Sigmoid colon (tissue), 7 donors: ENCODE measurements at regions of chr2 and their contacts with region 1.

Region 1: GRCh38 chr2:85390941-85391669 is 19.1 kb downstream of the CAPG start:
- DNase-seq: peak; percentile 83
- H3K4me3 ChIP-seq: no peak overlapping the region
- H3K27ac ChIP-seq: no peak overlapping the region
- H3K4me1 ChIP-seq: peaks cover 0 to 2% (median 2%) of the 10 kb centered on the region in 4 donors
- H3K27me3 ChIP-seq: no peaks in the 10 kb centered on the region
- CTCF ChIP-seq: peak; percentile 45 to 62 (median 58)
- EP300 ChIP-seq: no peak
- POLR2A ChIP-seq: no peak

Region 2: DNA sequence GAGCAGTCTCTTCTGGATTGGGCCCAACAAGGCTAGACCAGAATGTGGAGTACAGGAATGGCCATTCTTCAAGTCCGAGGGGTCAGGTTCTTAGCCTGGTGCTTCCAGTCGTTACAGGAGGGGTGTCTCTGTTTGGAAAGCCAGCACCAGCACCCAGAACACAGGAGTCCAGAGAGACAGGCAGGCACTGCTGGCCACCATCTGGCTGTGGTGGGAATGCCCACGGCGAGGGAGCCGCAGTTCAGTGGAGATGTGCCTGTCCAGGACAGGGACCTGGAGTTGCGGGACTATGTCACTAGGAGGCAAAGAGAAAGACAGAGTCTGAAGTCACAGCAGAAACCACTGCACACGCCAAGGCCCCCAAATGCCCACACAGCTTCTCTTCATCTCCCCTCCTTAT is 569.3 kb before region 1 on chr2:
- intact Hi-C with region 1: no loop called
- DNase-seq: no peak
- H3K4me3 ChIP-seq: no peak overlapping the region
- H3K27ac ChIP-seq: no peak overlapping the region
- H3K4me1 ChIP-seq: no peaks in the 10 kb centered on the region
- H3K27me3 ChIP-seq: no peaks in the 10 kb centered on the region
- CTCF ChIP-seq: no peak
- EP300 ChIP-seq: no peak
- POLR2A ChIP-seq: no peak

Region 3: DNA sequence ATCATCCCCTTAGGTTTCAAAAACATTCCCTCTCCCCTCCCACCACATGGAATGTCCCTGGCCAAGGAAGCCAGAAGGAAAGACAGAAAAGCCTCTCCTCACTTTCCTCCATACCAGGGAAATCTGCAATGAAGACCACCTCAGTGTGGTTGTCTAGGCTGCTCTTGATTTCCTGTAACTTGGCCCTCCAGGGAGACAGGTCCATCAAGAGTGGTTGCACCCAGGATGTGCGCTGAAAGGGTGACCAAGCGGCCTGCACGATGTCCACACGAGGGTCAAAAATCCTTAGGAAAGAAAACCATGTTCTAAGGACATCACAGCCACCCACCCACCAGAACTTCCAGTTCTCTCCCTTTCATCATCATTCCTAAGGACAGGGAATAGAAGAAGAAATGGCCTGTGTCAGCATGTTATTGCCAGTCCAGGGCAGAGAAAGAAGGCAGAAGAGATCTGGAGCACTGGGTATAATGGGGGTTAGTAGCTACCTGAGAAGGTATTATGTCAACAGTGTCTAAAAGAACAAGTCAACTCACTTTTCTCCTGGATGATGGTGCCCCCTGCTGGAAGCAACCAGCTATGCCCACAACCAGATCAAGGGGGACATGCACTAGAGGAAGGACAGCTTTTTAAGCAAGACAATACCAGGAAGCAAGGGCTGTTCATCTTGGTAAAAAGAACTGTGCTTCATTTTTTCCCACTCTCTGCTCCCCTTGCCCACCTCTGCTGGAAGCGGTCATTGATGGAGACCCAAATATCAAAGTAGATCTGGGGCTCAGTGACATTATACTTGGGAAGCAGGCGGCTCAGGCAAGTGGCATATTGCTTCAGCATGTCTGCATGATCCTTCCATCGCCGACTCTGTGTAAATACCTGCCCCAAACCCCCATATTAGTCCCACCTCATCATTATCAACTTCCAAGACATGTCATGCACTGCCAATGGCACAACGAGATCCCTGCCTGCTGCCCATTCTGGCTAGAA is 160.9 kb after region 1 on chr2:
- intact Hi-C with region 1: loop called (anchors 1 kb)
- DNase-seq: peak; percentile 90
- H3K4me3 ChIP-seq: no peak overlapping the region
- H3K27ac ChIP-seq: peak overlapping the region in 1 of 4 donors; percentile 25
- H3K4me1 ChIP-seq: no peaks in the 10 kb centered on the region
- H3K27me3 ChIP-seq: no peaks in the 10 kb centered on the region
- CTCF ChIP-seq: peak; percentile 85 to 94 (median 93)
- EP300 ChIP-seq: no peak
- POLR2A ChIP-seq: no peak

Region 4: GRCh38 chr2:85577386-85578242 is 186.5 kb after region 1 on chr2 and contains the start of gene VAMP8:
- intact Hi-C with region 1: no loop called
- DNase-seq: no peak
- H3K4me3 ChIP-seq: peak within 1 kb of the TSS in 3 of 4 donors; percentile 28 to 36 (median 29)
- H3K27ac ChIP-seq: peak within 1 kb of the TSS; percentile 50 to 71 (median 61)
- H3K4me1 ChIP-seq: peaks cover 0 to 6% (median 0%) of the 10 kb centered on the region in 4 donors
- H3K27me3 ChIP-seq: no peaks in the 10 kb centered on the region
- CTCF ChIP-seq: no peak
- EP300 ChIP-seq: no peak
- POLR2A ChIP-seq: no peak
- total RNA-seq, gene VAMP8: 1.9 to 33.3 (median 13.2) TPM

Region 5: GRCh38 chr2:85642725-85643124 is 251.6 kb after region 1 on chr2:
- intact Hi-C with region 1: no loop called
- DNase-seq: no peak
- H3K4me3 ChIP-seq: no peak overlapping the region
- H3K27ac ChIP-seq: no peak overlapping the region
- H3K4me1 ChIP-seq: no peaks in the 10 kb centered on the region
- H3K27me3 ChIP-seq: no peaks in the 10 kb centered on the region
- CTCF ChIP-seq: no peak
- EP300 ChIP-seq: no peak
- POLR2A ChIP-seq: no peak